SK-N-SH (cell line): ENCODE measurements at regions of chr1 and their contacts with region 1.

Region 1: GRCh38 chr1:156067262-156067661 is 6.3 kb downstream of the RAB25 start:
- DNase-seq: no peak
- H3K4me3 ChIP-seq: no peak overlapping the region
- H3K27ac ChIP-seq: no peak overlapping the region
- H3K4me1 ChIP-seq: peaks cover 0 to 17% of the 10 kb centered on the region in 2 experiments; a peak in 1 of 4 replicates
- H3K27me3 ChIP-seq: no peaks in the 10 kb centered on the region
- CTCF ChIP-seq: no peak
- EP300 ChIP-seq: no peak
- RAD21 ChIP-seq: no peak

Region 2: GRCh38 chr1:155934097-155934935 is 132.9 kb before region 1 on chr1 and contains the start of gene KHDC4:
- CTCF ChIA-PET with region 1: interaction called, 19 read pairs
- POLR2A ChIA-PET with region 1: no interaction called
- DNase-seq: peak; percentile 89
- H3K4me3 ChIP-seq: peak within 1 kb of the TSS; percentile 76 to 86
- H3K27ac ChIP-seq: peak within 1 kb of the TSS; percentile 93 to 97
- H3K4me1 ChIP-seq: peaks cover 20 to 25% of the 10 kb centered on the region in 2 experiments
- H3K27me3 ChIP-seq: no peaks in the 10 kb centered on the region
- CTCF ChIP-seq: no peak
- EP300 ChIP-seq: peak in 1 of 2 experiments; percentile 62; a peak in 3 of 4 replicates
- RAD21 ChIP-seq: no peak
- polyA plus RNA-seq, gene KHDC4: 43.1 and 94.4 TPM in 2 replicates

Region 3: GRCh38 chr1:156001682-156002171 is 65.5 kb before region 1 on chr1:
- CTCF ChIA-PET with region 1: interaction called, 11 read pairs
- POLR2A ChIA-PET with region 1: no interaction called
- DNase-seq: no peak
- H3K4me3 ChIP-seq: no peak overlapping the region
- H3K27ac ChIP-seq: no peak overlapping the region
- H3K4me1 ChIP-seq: peaks cover 0 to 8% of the 10 kb centered on the region in 2 experiments; a peak in 1 of 4 replicates
- H3K27me3 ChIP-seq: no peaks in the 10 kb centered on the region
- CTCF ChIP-seq: 0 out of 2 replicates have a peak, but pooled peaks have one; percentile 11
- EP300 ChIP-seq: no peak
- RAD21 ChIP-seq: peak; percentile 24

Region 4: GRCh38 chr1:156020292-156021089 is 46.8 kb before region 1 on chr1 and contains the start of gene SSR2:
- CTCF ChIA-PET with region 1: interaction called, 45 read pairs
- POLR2A ChIA-PET with region 1: interaction called, 6 read pairs
- DNase-seq: peak; percentile 89
- H3K4me3 ChIP-seq: peak within 1 kb of the TSS; percentile 67 to 96
- H3K27ac ChIP-seq: peak within 1 kb of the TSS; percentile 44 to 82; a peak in 3 of 4 replicates
- H3K4me1 ChIP-seq: peaks cover 7 to 10% of the 10 kb centered on the region in 2 experiments; a peak in 3 of 4 replicates
- H3K27me3 ChIP-seq: no peaks in the 10 kb centered on the region
- CTCF ChIP-seq: 0 out of 2 replicates have a peak, but pooled peaks have one; percentile 7
- EP300 ChIP-seq: peak in 1 of 2 experiments; percentile 17; a peak in 1 of 4 replicates
- RAD21 ChIP-seq: no peak
- polyA plus RNA-seq, gene SSR2: 1,136 and 1,763 TPM in 2 replicates

Region 5: GRCh38 chr1:156033011-156033410 is 34.3 kb before region 1 on chr1:
- CTCF ChIA-PET with region 1: interaction called, 11 read pairs
- POLR2A ChIA-PET with region 1: no interaction called
- DNase-seq: no peak
- H3K4me3 ChIP-seq: no peak overlapping the region
- H3K27ac ChIP-seq: no peak overlapping the region
- H3K4me1 ChIP-seq: no peaks in the 10 kb centered on the region
- H3K27me3 ChIP-seq: no peaks in the 10 kb centered on the region
- CTCF ChIP-seq: no peak
- EP300 ChIP-seq: no peak
- RAD21 ChIP-seq: no peak

Region 6: GRCh38 chr1:156054500-156055280 is 12.6 kb before region 1 on chr1 and contains the start of gene LAMTOR2:
- CTCF ChIA-PET with region 1: interaction called, 13 read pairs
- POLR2A ChIA-PET with region 1: no interaction called
- DNase-seq: peak; percentile 93
- H3K4me3 ChIP-seq: peak within 1 kb of the TSS; percentile 87 to 94
- H3K27ac ChIP-seq: peak within 1 kb of the TSS; percentile 93 to 100
- H3K4me1 ChIP-seq: peaks cover 6 to 17% of the 10 kb centered on the region in 2 experiments; a peak in 3 of 4 replicates
- H3K27me3 ChIP-seq: no peaks in the 10 kb centered on the region
- CTCF ChIP-seq: no peak
- EP300 ChIP-seq: no peak
- RAD21 ChIP-seq: no peak
- polyA plus RNA-seq, gene LAMTOR2: 184 and 230 TPM in 2 replicates